Naive thymus-derived CD4-positive, alpha-beta T cell (primary cell): ENCODE measurements at regions of chrX and their contacts with region 1.

Region 1: DNA sequence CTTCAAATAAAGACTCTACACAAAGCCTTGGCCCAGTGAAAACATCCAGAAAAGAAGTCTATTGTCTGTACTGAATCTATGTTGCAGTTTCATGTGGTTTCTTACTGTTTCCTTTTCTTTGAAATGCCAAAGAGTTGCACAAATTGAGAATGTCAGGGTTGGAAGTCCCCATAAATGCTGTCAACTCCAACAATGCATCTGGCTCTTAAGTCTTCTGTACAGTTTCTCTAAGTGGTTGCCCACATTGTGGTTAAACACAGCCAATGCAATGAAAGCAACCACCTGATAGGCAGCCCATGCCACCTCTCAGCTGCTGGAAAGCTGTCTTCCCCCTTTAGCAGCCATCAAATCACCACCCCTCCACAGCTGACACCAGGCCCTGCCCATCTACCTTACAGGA is 67.2 kb upstream of the C1GALT1C1 start:
- DNase-seq: peak; percentile 9 to 83 (median 71)
- ATAC-seq: peak; percentile 97
- H3K4me3 ChIP-seq: no peak overlapping the region
- H3K4me3 Mint-ChIP-seq: peak overlapping the region; percentile 41 to 83 (median 62)
- H3K27ac ChIP-seq: peak overlapping the region; percentile 67
- H3K27ac Mint-ChIP-seq: peak overlapping the region; percentile 88 to 99 (median 93)
- H3K4me1 ChIP-seq: peaks cover 0 to 20% of the 10 kb centered on the region in 2 donors
- H3K4me1 Mint-ChIP-seq: peaks cover 10 to 29% (median 22%) of the 10 kb centered on the region in 7 donors
- H3K27me3 ChIP-seq: no peaks in the 10 kb centered on the region
- H3K27me3 Mint-ChIP-seq: no peaks in the 10 kb centered on the region

Region 2: GRCh38 chrX:120499301-120500072 is 197.6 kb before region 1 on chrX:
- CTCF ChIA-PET with region 1: no interaction called
- POLR2A ChIA-PET with region 1: no interaction called
- intact Hi-C with region 1: loop called in 1 of 2 experiments (anchors 1 kb)
- DNase-seq: no peak
- ATAC-seq: no peak
- H3K4me3 ChIP-seq: no peak overlapping the region
- H3K4me3 Mint-ChIP-seq: no peak overlapping the region
- H3K27ac ChIP-seq: no peak overlapping the region
- H3K27ac Mint-ChIP-seq: peak overlapping the region in 1 of 9 donors; percentile 1
- H3K4me1 ChIP-seq: no peaks in the 10 kb centered on the region
- H3K4me1 Mint-ChIP-seq: peaks cover 5 to 11% (median 6%) of the 10 kb centered on the region in 7 donors
- H3K27me3 ChIP-seq: no peaks in the 10 kb centered on the region
- H3K27me3 Mint-ChIP-seq: peaks cover 0 to 5% (median 0%) of the 10 kb centered on the region in 5 donors

Region 3: GRCh38 chrX:120560842-120561633 is 136.0 kb before region 1 on chrX and contains the start of gene CUL4B:
- CTCF ChIA-PET with region 1: no interaction called
- POLR2A ChIA-PET with region 1: interaction called, 5 read pairs
- intact Hi-C with region 1: loop called (anchors 1 kb)
- DNase-seq: peak; percentile 73 to 95 (median 92)
- ATAC-seq: peak; percentile 96
- H3K4me3 ChIP-seq: peak within 1 kb of the TSS; percentile 87
- H3K4me3 Mint-ChIP-seq: peak within 1 kb of the TSS; percentile 87 to 99 (median 98)
- H3K27ac ChIP-seq: peak within 1 kb of the TSS; percentile 100
- H3K27ac Mint-ChIP-seq: peak within 1 kb of the TSS; percentile 88 to 100 (median 95)
- H3K4me1 ChIP-seq: peaks cover 0 to 3% of the 10 kb centered on the region in 2 donors
- H3K4me1 Mint-ChIP-seq: peaks cover 6 to 32% (median 26%) of the 10 kb centered on the region in 7 donors
- H3K27me3 ChIP-seq: no peaks in the 10 kb centered on the region
- H3K27me3 Mint-ChIP-seq: no peaks in the 10 kb centered on the region
- total RNA-seq, gene CUL4B: 34.9 to 67.7 (median 43.0) TPM

Region 4: GRCh38 chrX:120603707-120604360 is 93.2 kb before region 1 on chrX and contains the start of gene MCTS1:
- CTCF ChIA-PET with region 1: no interaction called
- POLR2A ChIA-PET with region 1: no interaction called
- intact Hi-C with region 1: loop called (anchors 2 kb)
- DNase-seq: peak; percentile 40 to 91 (median 82)
- ATAC-seq: peak; percentile 95
- H3K4me3 ChIP-seq: peak within 1 kb of the TSS; percentile 55
- H3K4me3 Mint-ChIP-seq: peak within 1 kb of the TSS; percentile 91 to 99 (median 96)
- H3K27ac ChIP-seq: peak within 1 kb of the TSS; percentile 87
- H3K27ac Mint-ChIP-seq: peak within 1 kb of the TSS; percentile 96 to 99 (median 98)
- H3K4me1 ChIP-seq: peaks cover 6 to 10% of the 10 kb centered on the region in 2 donors
- H3K4me1 Mint-ChIP-seq: peaks cover 0 to 19% (median 10%) of the 10 kb centered on the region in 7 donors
- H3K27me3 ChIP-seq: no peaks in the 10 kb centered on the region
- H3K27me3 Mint-ChIP-seq: peaks cover 0 to 7% (median 0%) of the 10 kb centered on the region in 5 donors
- total RNA-seq, gene MCTS1: 17.6 to 55.6 (median 27.3) TPM

Region 5: GRCh38 chrX:120680090-120680489 is 17.0 kb before region 1 on chrX:
- CTCF ChIA-PET with region 1: no interaction called
- POLR2A ChIA-PET with region 1: no interaction called
- intact Hi-C with region 1: loop called in 1 of 2 experiments (anchors 1 kb)
- DNase-seq: no peak
- ATAC-seq: no peak
- H3K4me3 ChIP-seq: no peak overlapping the region
- H3K4me3 Mint-ChIP-seq: peak overlapping the region in 9 of 10 donors; percentile 2 to 79 (median 60)
- H3K27ac ChIP-seq: no peak overlapping the region
- H3K27ac Mint-ChIP-seq: peak overlapping the region; percentile 2 to 91 (median 76)
- H3K4me1 ChIP-seq: no peaks in the 10 kb centered on the region
- H3K4me1 Mint-ChIP-seq: peaks cover 0 to 15% (median 7%) of the 10 kb centered on the region in 7 donors
- H3K27me3 ChIP-seq: no peaks in the 10 kb centered on the region
- H3K27me3 Mint-ChIP-seq: no peaks in the 10 kb centered on the region

Region 6: DNA sequence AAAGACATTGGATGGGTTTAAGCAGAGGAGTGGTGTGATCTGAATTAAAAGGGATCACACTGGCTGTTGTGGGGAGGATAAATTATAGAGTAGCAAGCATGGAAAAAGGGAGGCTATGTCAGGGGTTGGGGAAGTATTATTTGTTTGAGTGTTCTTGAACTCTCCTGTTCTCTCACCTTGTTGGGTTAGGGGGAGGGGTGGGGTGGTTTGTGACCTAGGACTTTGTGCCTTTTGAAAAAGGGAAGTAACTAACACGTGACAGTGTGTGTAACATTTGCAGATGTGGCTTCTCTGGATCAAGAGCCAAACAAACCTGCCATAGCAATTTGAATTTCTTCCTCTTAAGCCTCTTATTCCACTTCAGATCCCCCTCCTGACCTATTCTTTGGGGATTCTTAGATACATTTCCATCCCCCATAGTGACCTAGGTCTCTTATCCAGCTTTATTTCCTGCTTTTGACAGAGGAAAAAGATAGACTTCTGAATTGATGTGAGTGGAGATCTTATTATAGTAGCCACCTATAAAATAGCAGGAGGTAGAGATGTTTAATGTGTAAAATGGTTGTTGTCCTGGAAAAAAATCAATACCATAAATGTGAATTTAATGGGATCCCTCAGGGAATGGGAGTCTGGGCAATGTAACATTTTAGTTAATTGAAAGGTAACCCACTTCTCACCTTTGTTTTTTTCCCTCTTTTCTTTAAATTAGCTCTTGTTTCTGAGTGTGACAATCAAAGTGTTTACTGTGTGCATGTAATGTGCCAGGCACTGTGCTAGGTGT is 58.2 kb after region 1 on chrX:
- CTCF ChIA-PET with region 1: no interaction called
- POLR2A ChIA-PET with region 1: no interaction called
- intact Hi-C with region 1: loop called (anchors 5 to 10 kb)
- DNase-seq: peak in 6 of 9 donors; percentile 20 to 61 (median 41)
- ATAC-seq: peak; percentile 60
- H3K4me3 ChIP-seq: no peak overlapping the region
- H3K4me3 Mint-ChIP-seq: peak overlapping the region in 9 of 10 donors; percentile 7 to 58 (median 52)
- H3K27ac ChIP-seq: no peak overlapping the region
- H3K27ac Mint-ChIP-seq: peak overlapping the region in 8 of 9 donors; percentile 28 to 80 (median 62)
- H3K4me1 ChIP-seq: peaks cover 0 to 39% of the 10 kb centered on the region in 2 donors
- H3K4me1 Mint-ChIP-seq: peaks cover 25 to 59% (median 52%) of the 10 kb centered on the region in 7 donors
- H3K27me3 ChIP-seq: no peaks in the 10 kb centered on the region
- H3K27me3 Mint-ChIP-seq: no peaks in the 10 kb centered on the region

Region 7: GRCh38 chrX:120769576-120770341 is 72.7 kb after region 1 on chrX:
- CTCF ChIA-PET with region 1: no interaction called
- POLR2A ChIA-PET with region 1: no interaction called
- intact Hi-C with region 1: loop called (anchors 1 to 2 kb)
- DNase-seq: peak in 4 of 9 donors; percentile 5 to 39 (median 34)
- ATAC-seq: no peak
- H3K4me3 ChIP-seq: no peak overlapping the region
- H3K4me3 Mint-ChIP-seq: no peak overlapping the region
- H3K27ac ChIP-seq: no peak overlapping the region
- H3K27ac Mint-ChIP-seq: no peak overlapping the region
- H3K4me1 ChIP-seq: no peaks in the 10 kb centered on the region
- H3K4me1 Mint-ChIP-seq: peaks cover 0 to 11% (median 0%) of the 10 kb centered on the region in 7 donors
- H3K27me3 ChIP-seq: no peaks in the 10 kb centered on the region
- H3K27me3 Mint-ChIP-seq: no peaks in the 10 kb centered on the region